Activated CD4-positive, alpha-beta T cell treated with anti-CD3 and anti-CD28 coated beads, Interleukin-2, amount 10 ng/mL, durations not matched to agents 24 days and 14 days (primary cell): ENCODE measurements at regions of chr11 and their contacts with region 1.

Region 1: GRCh38 chr11:78416305-78417178 is 1.1 kb downstream of the GAB2 start:
- DNase-seq: peak; percentile 95
- H3K4me3 Mint-ChIP-seq: peak overlapping the region; percentile 98
- H3K27ac Mint-ChIP-seq: peak overlapping the region; percentile 95
- H3K4me1 Mint-ChIP-seq: peaks cover 57% of the 10 kb centered on the region
- H3K27me3 Mint-ChIP-seq: peaks cover 11% of the 10 kb centered on the region

Region 2: DNA sequence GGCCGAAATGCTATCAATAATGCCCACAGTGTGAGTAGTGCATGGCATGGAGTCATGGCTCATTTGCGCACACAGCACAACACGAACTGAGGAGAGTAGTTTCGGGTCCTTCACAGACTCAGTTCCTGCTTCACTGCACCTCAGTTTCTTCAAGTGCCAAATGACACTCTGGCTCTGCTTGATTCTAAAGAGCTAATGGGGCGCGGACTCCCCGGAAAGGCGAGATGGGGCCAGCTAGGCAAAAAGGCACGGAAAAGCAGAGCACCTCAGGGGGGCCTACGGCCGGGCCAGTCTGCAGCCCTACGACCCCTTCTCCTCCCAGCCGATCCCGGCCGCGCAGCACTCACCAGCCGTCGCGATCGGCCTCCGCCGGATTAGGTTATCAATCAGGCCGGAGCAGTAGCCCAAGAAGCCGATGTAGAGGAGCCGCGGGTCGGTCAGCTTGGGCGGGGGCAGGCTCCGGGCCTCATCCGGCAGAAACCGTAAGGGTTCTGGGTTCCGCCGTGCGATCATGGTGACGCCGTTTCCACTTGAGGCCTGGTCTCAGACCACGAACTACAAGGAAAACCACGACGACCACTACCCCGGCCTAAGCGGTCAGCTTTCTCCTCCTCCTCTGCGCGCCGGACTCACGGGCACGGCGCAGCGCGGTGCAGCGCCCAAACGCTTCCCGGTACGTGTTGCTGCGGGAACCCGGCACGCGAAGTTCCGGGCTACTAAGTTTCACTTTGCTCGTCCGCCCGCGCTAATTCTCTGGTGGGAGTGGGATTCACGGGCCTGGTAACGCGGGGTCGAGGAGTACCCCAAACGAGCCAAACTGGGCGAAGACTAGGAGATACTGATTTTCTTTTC is 337.1 kb before region 1 on chr11 and contains the start of gene NDUFC2:
- intact Hi-C with region 1: loop called (anchors 1 kb)
- DNase-seq: peak; percentile 92
- H3K4me3 Mint-ChIP-seq: peak within 1 kb of the TSS; percentile 94
- H3K27ac Mint-ChIP-seq: peak within 1 kb of the TSS; percentile 91
- H3K4me1 Mint-ChIP-seq: peaks cover 51% of the 10 kb centered on the region
- H3K27me3 Mint-ChIP-seq: peaks cover 2% of the 10 kb centered on the region
- total RNA-seq, gene NDUFC2: 207 and 219 TPM in 2 replicates

Region 3: GRCh38 chr11:78228467-78228866 is 188.1 kb before region 1 on chr11:
- intact Hi-C with region 1: loop called (anchors 1 kb)
- DNase-seq: peak; percentile 83
- H3K4me3 Mint-ChIP-seq: no peak overlapping the region
- H3K27ac Mint-ChIP-seq: peak overlapping the region; percentile 31
- H3K4me1 Mint-ChIP-seq: peaks cover 59% of the 10 kb centered on the region
- H3K27me3 Mint-ChIP-seq: no peaks in the 10 kb centered on the region

Region 4: DNA sequence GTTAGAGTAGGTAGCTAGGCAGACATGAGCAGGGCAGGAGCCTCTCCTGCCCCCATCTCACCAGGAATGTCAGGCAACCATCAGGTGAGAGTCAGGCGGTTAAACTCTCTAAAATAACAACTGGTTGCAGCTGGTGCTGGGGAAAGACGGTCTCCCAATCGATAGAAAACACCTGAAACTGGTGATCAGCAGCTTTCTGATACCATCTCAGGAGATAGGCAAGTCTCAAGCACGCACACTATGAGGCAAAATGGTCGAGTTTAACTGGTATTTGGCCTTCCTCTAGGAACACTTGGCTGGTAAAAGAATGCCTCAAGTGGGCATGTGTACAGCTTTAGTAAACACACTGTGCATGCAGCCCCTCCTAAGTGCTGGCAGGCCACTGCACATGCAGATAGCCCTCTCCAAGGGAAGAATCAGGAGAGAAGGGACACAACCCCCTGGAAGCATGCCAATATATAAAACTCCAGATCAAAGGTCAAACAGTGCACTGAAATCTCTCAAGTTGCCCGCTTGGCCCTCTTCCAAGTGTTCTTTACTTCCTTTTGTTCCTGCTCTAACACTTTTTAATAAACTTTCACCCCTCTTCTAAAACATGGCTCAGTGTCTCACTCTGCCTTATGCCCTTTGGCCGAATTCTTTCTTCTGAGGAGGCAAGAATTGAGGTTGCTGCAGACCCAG is 139.1 kb before region 1 on chr11:
- intact Hi-C with region 1: no loop called
- DNase-seq: no peak
- H3K4me3 Mint-ChIP-seq: no peak overlapping the region
- H3K27ac Mint-ChIP-seq: no peak overlapping the region
- H3K4me1 Mint-ChIP-seq: peaks cover 11% of the 10 kb centered on the region
- H3K27me3 Mint-ChIP-seq: no peaks in the 10 kb centered on the region

Region 5: DNA sequence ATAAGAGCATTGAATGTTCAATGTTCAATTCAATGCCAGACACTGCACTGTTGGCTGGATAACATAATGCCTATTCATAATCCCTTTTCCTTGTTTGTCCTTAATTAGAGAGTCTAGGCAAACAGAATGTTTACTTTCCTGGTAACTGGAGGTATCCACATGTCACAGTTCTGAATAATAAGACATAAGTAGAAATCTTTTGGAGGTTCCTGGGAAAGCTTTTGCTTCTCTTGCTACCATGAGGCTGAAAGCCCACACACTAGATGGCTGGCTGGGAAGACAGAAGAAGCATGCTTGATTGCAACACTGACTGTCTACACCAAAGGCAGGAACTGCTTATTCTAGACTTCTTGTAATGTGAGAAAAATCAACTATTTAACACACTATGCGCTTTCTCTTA is 78.4 kb before region 1 on chr11:
- intact Hi-C with region 1: loop called (anchors 5 kb)
- DNase-seq: no peak
- H3K4me3 Mint-ChIP-seq: peak overlapping the region; percentile 12
- H3K27ac Mint-ChIP-seq: peak overlapping the region; percentile 94
- H3K4me1 Mint-ChIP-seq: peaks cover 73% of the 10 kb centered on the region
- H3K27me3 Mint-ChIP-seq: no peaks in the 10 kb centered on the region

Region 6: GRCh38 chr11:78432058-78432515 is 15.5 kb after region 1 on chr11:
- intact Hi-C with region 1: loop called (anchors 1 kb)
- DNase-seq: peak; percentile 72
- H3K4me3 Mint-ChIP-seq: no peak overlapping the region
- H3K27ac Mint-ChIP-seq: no peak overlapping the region
- H3K4me1 Mint-ChIP-seq: peaks cover 21% of the 10 kb centered on the region
- H3K27me3 Mint-ChIP-seq: no peaks in the 10 kb centered on the region

Region 7: GRCh38 chr11:78902771-78903507 is 486.4 kb after region 1 on chr11:
- intact Hi-C with region 1: no loop called
- DNase-seq: no peak
- H3K4me3 Mint-ChIP-seq: no peak overlapping the region
- H3K27ac Mint-ChIP-seq: no peak overlapping the region
- H3K4me1 Mint-ChIP-seq: no peaks in the 10 kb centered on the region
- H3K27me3 Mint-ChIP-seq: peaks cover 10% of the 10 kb centered on the region